Sigmoid colon (tissue), 7 donors: ENCODE measurements at regions of chrX and their contacts with region 1.

Region 1: DNA sequence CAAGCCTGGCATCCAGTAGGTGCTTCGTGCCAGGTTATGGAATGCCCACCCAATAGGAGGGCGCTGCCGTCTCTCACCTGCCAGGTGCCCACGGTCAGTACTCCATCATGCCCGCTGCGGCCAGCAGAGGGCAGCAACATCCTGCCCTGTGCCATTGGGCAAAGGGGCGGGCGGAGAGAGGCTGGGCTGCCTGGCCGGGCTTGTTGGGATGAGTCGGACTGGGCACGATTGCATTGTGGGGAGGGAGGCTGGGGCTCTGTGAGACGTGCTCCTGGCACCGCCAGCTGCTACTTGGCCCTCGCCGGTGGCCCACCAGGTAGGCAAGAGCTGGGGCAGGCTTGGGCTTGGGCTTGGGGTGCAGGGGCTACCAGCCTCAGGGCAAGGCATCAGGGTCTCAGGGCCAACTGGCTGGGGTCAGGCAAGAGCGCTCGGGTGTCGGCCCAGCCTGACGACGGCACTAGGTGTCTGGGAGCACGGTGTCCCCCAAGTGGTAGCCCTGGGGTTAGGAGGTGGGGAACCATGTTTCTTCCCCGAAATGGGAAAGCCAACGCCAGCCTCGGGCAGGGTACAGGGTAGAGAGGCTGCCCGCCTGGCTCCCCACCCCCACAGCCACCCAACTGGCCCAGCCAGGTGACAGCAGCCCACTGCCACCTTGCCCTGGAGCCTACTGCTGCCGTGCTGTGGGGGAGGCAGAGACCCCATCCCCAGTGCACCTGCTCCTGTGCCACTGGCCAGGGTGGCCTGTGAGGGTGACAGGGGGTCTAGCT is at the start of gene PLXNB3:
- DNase-seq: peak; percentile 92
- H3K4me3 ChIP-seq: peak within 1 kb of the TSS; percentile 14 to 51 (median 46)
- H3K27ac ChIP-seq: peak within 1 kb of the TSS; percentile 75 to 86 (median 82)
- H3K4me1 ChIP-seq: peaks cover 0 to 34% (median 16%) of the 10 kb centered on the region in 4 donors
- H3K27me3 ChIP-seq: no peaks in the 10 kb centered on the region
- CTCF ChIP-seq: peak; percentile 56 to 91 (median 66)
- EP300 ChIP-seq: no peak
- POLR2A ChIP-seq: peak in 1 of 2 donors; percentile 22
- total RNA-seq, gene PLXNB3: 9.2 to 50.1 (median 25.7) TPM

Region 2: GRCh38 chrX:153828723-153829548 is 64.8 kb after region 1 on chrX:
- intact Hi-C with region 1: loop called (anchors 1 kb)
- DNase-seq: peak; percentile 52
- H3K4me3 ChIP-seq: peak overlapping the region; percentile 34 to 59 (median 52)
- H3K27ac ChIP-seq: peak overlapping the region; percentile 69 to 79 (median 76)
- H3K4me1 ChIP-seq: peaks cover 0 to 22% (median 4%) of the 10 kb centered on the region in 4 donors
- H3K27me3 ChIP-seq: peaks cover 0 to 7% (median 0%) of the 10 kb centered on the region in 3 donors
- CTCF ChIP-seq: no peak
- EP300 ChIP-seq: no peak
- POLR2A ChIP-seq: no peak